ENCODE measurements at regions of chr4 and their contacts with region 1.

Region 1: GRCh38 chr4:26885912-26886274 is 25.3 kb downstream of the STIM2 start:
- DNase-seq: peak; percentile 65
- ATAC-seq: peak; percentile 81
- H3K4me3 ChIP-seq: peak overlapping the region; percentile 45; the same call in 1 of the 2 replicates
- H3K27ac ChIP-seq: peak overlapping the region; percentile 89
- H3K4me1 ChIP-seq: peaks cover 33% of the 10 kb centered on the region
- H3K27me3 ChIP-seq: no peaks in the 10 kb centered on the region
- CTCF ChIP-seq: no peak
- EP300 ChIP-seq: peak; percentile 29 to 81; a peak in 3 of 4 replicates
- POLR2A ChIP-seq: no peak
- RAD21 ChIP-seq: 0 out of 2 replicates have a peak, but pooled peaks have one; percentile 17

Region 2: GRCh38 chr4:26854701-26855100 is 31.2 kb before region 1 on chr4:
- CTCF ChIA-PET with region 1: interaction called, 5 read pairs
- POLR2A ChIA-PET with region 1: interaction called, 51 read pairs
- RAD21 ChIA-PET with region 1: interaction called, 55 read pairs
- SMC1A ChIA-PET with region 1: interaction called, 43 read pairs
- in situ Hi-C with region 1: no loop called
- intact Hi-C with region 1: no loop called
- DNase-seq: no peak
- ATAC-seq: no peak
- H3K4me3 ChIP-seq: no peak overlapping the region
- H3K27ac ChIP-seq: no peak overlapping the region
- H3K4me1 ChIP-seq: peaks cover 6% of the 10 kb centered on the region
- H3K27me3 ChIP-seq: no peaks in the 10 kb centered on the region
- CTCF ChIP-seq: no peak
- EP300 ChIP-seq: no peak
- POLR2A ChIP-seq: no peak
- RAD21 ChIP-seq: no peak

Region 3: GRCh38 chr4:26867914-26868684 is 17.8 kb before region 1 on chr4:
- CTCF ChIA-PET with region 1: interaction called, 22 read pairs
- POLR2A ChIA-PET with region 1: interaction called, 37 read pairs
- RAD21 ChIA-PET with region 1: interaction called, 81 read pairs
- SMC1A ChIA-PET with region 1: interaction called, 116 read pairs
- in situ Hi-C with region 1: no loop called
- intact Hi-C with region 1: no loop called
- DNase-seq: no peak
- ATAC-seq: peak; percentile 36
- H3K4me3 ChIP-seq: no peak overlapping the region; the same call in 1 of the 2 replicates
- H3K27ac ChIP-seq: 0 out of 2 replicates have a peak overlapping the region, but pooled peaks have one; percentile 37
- H3K4me1 ChIP-seq: peaks cover 9% of the 10 kb centered on the region
- H3K27me3 ChIP-seq: no peaks in the 10 kb centered on the region
- CTCF ChIP-seq: no peak
- EP300 ChIP-seq: no peak
- POLR2A ChIP-seq: no peak
- RAD21 ChIP-seq: no peak

Region 4: GRCh38 chr4:26899991-26900390 is 14.1 kb after region 1 on chr4:
- CTCF ChIA-PET with region 1: interaction called, 3 read pairs
- POLR2A ChIA-PET with region 1: interaction called, 5 read pairs
- RAD21 ChIA-PET with region 1: interaction called, 11 read pairs
- SMC1A ChIA-PET with region 1: interaction called, 41 read pairs
- in situ Hi-C with region 1: no loop called
- intact Hi-C with region 1: no loop called
- DNase-seq: no peak
- ATAC-seq: peak; percentile 26; the same call in 2 of the 3 replicates
- H3K4me3 ChIP-seq: no peak overlapping the region
- H3K27ac ChIP-seq: no peak overlapping the region
- H3K4me1 ChIP-seq: no peaks in the 10 kb centered on the region
- H3K27me3 ChIP-seq: no peaks in the 10 kb centered on the region
- CTCF ChIP-seq: no peak
- EP300 ChIP-seq: no peak
- POLR2A ChIP-seq: no peak
- RAD21 ChIP-seq: no peak

Region 5: DNA sequence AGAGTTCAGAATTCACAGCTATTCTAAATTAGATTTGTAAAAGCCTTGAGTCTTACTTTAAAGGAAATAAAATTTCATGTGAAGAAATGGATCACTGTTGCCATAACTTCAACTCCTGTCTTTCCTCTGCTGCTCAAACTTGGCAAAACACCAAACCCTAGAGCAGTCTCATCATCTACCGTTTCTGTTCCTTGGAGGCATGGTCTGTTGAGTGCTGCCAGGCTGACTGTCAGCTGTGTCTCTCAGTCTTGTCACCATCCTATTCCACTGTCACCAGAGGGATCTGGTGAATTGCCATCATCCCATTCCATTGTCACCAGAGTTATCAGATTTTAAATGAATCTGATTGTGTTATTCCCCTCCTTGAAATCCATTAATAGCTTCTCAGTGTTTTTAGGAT is 30.3 kb after region 1 on chr4:
- CTCF ChIA-PET with region 1: interaction called, 3 read pairs
- POLR2A ChIA-PET with region 1: interaction called, 4 read pairs
- RAD21 ChIA-PET with region 1: interaction called, 11 read pairs
- SMC1A ChIA-PET with region 1: interaction called, 4 read pairs
- in situ Hi-C with region 1: no loop called
- intact Hi-C with region 1: no loop called
- DNase-seq: no peak
- ATAC-seq: peak; percentile 25; the same call in 1 of the 3 replicates
- H3K4me3 ChIP-seq: no peak overlapping the region
- H3K27ac ChIP-seq: no peak overlapping the region
- H3K4me1 ChIP-seq: peaks cover 7% of the 10 kb centered on the region
- H3K27me3 ChIP-seq: no peaks in the 10 kb centered on the region
- CTCF ChIP-seq: no peak
- EP300 ChIP-seq: no peak
- POLR2A ChIP-seq: no peak
- RAD21 ChIP-seq: no peak

Region 6: DNA sequence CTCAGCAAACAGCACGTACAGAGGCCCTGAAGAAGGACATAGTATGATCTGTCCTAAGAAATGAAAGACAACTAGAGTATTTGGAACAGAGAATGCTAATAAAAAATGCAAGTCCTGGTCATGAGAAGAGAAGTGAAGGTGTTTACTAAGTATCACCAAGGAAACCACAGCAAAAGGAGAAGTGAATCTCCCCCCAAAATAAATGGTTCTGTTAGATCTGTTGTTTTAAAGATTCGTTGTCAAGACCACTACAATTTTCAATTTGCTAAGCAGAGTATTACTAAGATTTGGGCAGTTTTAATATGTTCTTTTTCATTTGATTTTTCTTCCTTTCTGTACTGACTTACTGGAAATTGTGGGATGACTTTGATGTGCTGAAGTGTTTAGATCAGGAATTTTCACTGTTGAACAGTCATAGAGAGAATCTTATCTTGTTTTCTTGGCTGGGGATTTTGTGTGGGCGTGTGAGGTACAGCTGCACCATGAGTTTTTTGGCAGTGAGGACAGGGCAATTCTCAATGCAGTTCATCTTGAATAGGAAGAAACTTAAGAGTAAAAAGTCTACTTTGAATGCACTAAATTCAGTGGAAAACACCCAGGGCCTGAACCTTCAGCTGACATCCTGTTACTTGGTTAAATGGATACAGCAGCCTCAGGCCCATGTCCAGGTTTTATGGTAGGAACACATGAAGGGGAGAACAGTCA is 106.9 kb after region 1 on chr4:
- CTCF ChIA-PET with region 1: interaction called, 7 read pairs
- POLR2A ChIA-PET with region 1: interaction called, 33 read pairs
- RAD21 ChIA-PET with region 1: interaction called, 82 read pairs
- SMC1A ChIA-PET with region 1: interaction called, 92 read pairs
- in situ Hi-C with region 1: loop called (anchors 10 kb)
- intact Hi-C with region 1: loop called (anchors 1 kb)
- DNase-seq: peak; percentile 72
- ATAC-seq: peak; percentile 94
- H3K4me3 ChIP-seq: peak overlapping the region; percentile 39; the same call in 1 of the 2 replicates
- H3K27ac ChIP-seq: peak overlapping the region; percentile 89
- H3K4me1 ChIP-seq: peaks cover 21% of the 10 kb centered on the region
- H3K27me3 ChIP-seq: no peaks in the 10 kb centered on the region
- CTCF ChIP-seq: no peak
- EP300 ChIP-seq: peak; percentile 78 to 84
- POLR2A ChIP-seq: no peak
- RAD21 ChIP-seq: no peak

Region 7: GRCh38 chr4:27270435-27270834 is 384.5 kb after region 1 on chr4:
- CTCF ChIA-PET with region 1: no interaction called
- POLR2A ChIA-PET with region 1: no interaction called
- RAD21 ChIA-PET with region 1: no interaction called
- SMC1A ChIA-PET with region 1: no interaction called
- in situ Hi-C with region 1: no loop called
- intact Hi-C with region 1: no loop called
- DNase-seq: no peak
- ATAC-seq: no peak
- H3K4me3 ChIP-seq: no peak overlapping the region
- H3K27ac ChIP-seq: no peak overlapping the region
- H3K4me1 ChIP-seq: no peaks in the 10 kb centered on the region
- H3K27me3 ChIP-seq: no peaks in the 10 kb centered on the region
- CTCF ChIP-seq: no peak
- EP300 ChIP-seq: no peak
- POLR2A ChIP-seq: no peak
- RAD21 ChIP-seq: no peak

Region 8: DNA sequence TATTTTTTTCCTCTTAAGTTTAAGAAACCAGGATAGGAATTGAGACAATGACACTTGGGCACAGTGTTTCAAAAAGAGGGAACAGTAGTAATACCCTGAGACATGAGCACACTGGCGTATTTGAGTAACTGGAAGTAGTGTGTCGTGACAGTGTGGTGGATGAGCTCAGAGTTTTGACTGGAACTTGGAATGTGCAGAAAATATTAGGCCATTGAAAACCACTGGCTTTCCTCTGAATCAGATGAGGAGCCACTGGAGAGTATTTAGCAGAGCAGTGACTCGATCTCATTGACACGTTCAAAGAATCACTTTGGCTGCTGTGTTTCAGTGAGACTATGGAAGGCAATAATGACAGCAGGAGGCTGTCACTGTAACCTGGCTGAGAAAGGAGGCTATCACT is 1506.0 kb after region 1 on chr4:
- CTCF ChIA-PET with region 1: no interaction called
- POLR2A ChIA-PET with region 1: no interaction called
- RAD21 ChIA-PET with region 1: no interaction called
- SMC1A ChIA-PET with region 1: no interaction called
- in situ Hi-C with region 1: no loop called
- intact Hi-C with region 1: no loop called
- DNase-seq: no peak
- ATAC-seq: 0 out of 3 replicates have a peak, but pooled peaks have one; percentile 17
- H3K4me3 ChIP-seq: no peak overlapping the region
- H3K27ac ChIP-seq: no peak overlapping the region
- H3K4me1 ChIP-seq: no peaks in the 10 kb centered on the region
- H3K27me3 ChIP-seq: no peaks in the 10 kb centered on the region
- CTCF ChIP-seq: no peak
- EP300 ChIP-seq: no peak
- POLR2A ChIP-seq: no peak
- RAD21 ChIP-seq: no peak